ENCODE measurements at regions of chr5 and their contacts with region 1.

Region 1: GRCh38 chr5:143182901-143183820 is 220.3 kb downstream of the NR3C1 start:
- DNase-seq: peak; percentile 85
- H3K4me3 Mint-ChIP-seq: peak overlapping the region; percentile 73
- H3K27ac Mint-ChIP-seq: peak overlapping the region; percentile 97
- H3K4me1 Mint-ChIP-seq: peaks cover 59% of the 10 kb centered on the region
- H3K27me3 Mint-ChIP-seq: no peaks in the 10 kb centered on the region

Region 2: DNA sequence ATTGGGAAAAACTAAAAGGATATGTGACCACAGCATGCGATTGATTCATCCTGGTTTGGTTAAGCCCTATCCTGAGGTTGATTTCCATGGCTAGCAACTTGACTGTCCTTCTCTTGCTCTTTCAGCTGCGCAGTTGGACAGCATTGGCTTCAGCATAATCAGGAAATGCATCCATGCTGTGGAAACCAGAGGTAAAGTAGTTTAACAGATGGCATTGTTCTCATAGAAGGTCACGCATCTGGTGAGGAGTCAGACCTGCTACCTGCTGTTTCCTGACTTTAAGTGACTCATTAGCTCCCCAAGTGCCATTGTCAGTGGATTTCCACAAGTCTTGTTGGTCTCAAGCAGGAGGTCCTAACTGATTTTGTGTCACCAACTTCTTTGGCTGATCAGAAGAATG is 146.1 kb before region 1 on chr5:
- intact Hi-C with region 1: loop called (anchors 2 kb)
- DNase-seq: no peak
- H3K4me3 Mint-ChIP-seq: no peak overlapping the region
- H3K27ac Mint-ChIP-seq: peak overlapping the region; percentile 86
- H3K4me1 Mint-ChIP-seq: peaks cover 47% of the 10 kb centered on the region
- H3K27me3 Mint-ChIP-seq: no peaks in the 10 kb centered on the region

Region 3: GRCh38 chr5:143066556-143067281 is 116.4 kb before region 1 on chr5:
- intact Hi-C with region 1: loop called (anchors 1 kb)
- DNase-seq: no peak
- H3K4me3 Mint-ChIP-seq: peak overlapping the region; percentile 29
- H3K27ac Mint-ChIP-seq: peak overlapping the region; percentile 87
- H3K4me1 Mint-ChIP-seq: peaks cover 30% of the 10 kb centered on the region
- H3K27me3 Mint-ChIP-seq: no peaks in the 10 kb centered on the region

Region 4: GRCh38 chr5:143124593-143124992 is 58.6 kb before region 1 on chr5:
- intact Hi-C with region 1: loop called (anchors 5 kb)
- DNase-seq: no peak
- H3K4me3 Mint-ChIP-seq: no peak overlapping the region
- H3K27ac Mint-ChIP-seq: no peak overlapping the region
- H3K4me1 Mint-ChIP-seq: peaks cover 21% of the 10 kb centered on the region
- H3K27me3 Mint-ChIP-seq: no peaks in the 10 kb centered on the region

Region 5: GRCh38 chr5:143222287-143223231 is 39.4 kb after region 1 on chr5:
- intact Hi-C with region 1: loop called (anchors 1 kb)
- DNase-seq: peak; percentile 87
- H3K4me3 Mint-ChIP-seq: peak overlapping the region; percentile 71
- H3K27ac Mint-ChIP-seq: peak overlapping the region; percentile 95
- H3K4me1 Mint-ChIP-seq: peaks cover 56% of the 10 kb centered on the region
- H3K27me3 Mint-ChIP-seq: no peaks in the 10 kb centered on the region

Region 6: GRCh38 chr5:143350751-143351603 is 167.8 kb after region 1 on chr5:
- intact Hi-C with region 1: loop called (anchors 2 kb)
- DNase-seq: no peak
- H3K4me3 Mint-ChIP-seq: no peak overlapping the region
- H3K27ac Mint-ChIP-seq: no peak overlapping the region
- H3K4me1 Mint-ChIP-seq: peaks cover 42% of the 10 kb centered on the region
- H3K27me3 Mint-ChIP-seq: no peaks in the 10 kb centered on the region

Region 7: DNA sequence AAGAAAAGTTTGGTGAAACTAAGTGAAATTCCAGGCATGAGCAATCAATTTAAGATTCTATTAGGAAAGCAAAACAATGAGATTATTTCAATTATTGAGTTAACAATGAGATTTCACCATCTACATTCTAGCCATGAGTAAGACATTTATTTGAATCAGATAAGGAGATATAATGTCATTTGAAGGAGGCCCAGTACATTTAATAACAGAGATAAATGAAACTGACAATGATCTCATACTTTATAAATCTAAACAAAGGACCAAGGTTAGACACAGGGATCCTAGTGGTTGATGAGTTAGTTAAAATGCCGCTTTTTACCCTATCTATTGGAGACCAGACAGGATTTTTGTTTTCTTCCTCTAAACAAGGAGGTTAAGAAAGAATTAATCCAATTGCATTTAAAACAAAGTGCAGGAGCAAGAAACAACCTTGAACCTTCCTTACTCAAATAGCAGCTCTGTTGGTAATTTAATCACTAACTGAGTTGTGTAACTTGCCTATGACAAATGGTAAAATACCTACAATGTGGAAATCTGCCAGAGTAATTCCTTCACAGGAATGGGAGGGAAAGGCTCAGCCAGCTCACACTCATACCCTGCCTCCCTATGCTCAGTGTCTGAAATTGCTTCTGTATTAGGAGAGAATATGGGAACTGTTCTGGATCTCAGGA is 323.9 kb after region 1 on chr5:
- intact Hi-C with region 1: no loop called
- DNase-seq: no peak
- H3K4me3 Mint-ChIP-seq: no peak overlapping the region
- H3K27ac Mint-ChIP-seq: no peak overlapping the region
- H3K4me1 Mint-ChIP-seq: no peaks in the 10 kb centered on the region
- H3K27me3 Mint-ChIP-seq: no peaks in the 10 kb centered on the region

Region 8: GRCh38 chr5:144731786-144732185 is 1548.6 kb after region 1 on chr5:
- intact Hi-C with region 1: no loop called
- DNase-seq: no peak
- H3K4me3 Mint-ChIP-seq: no peak overlapping the region
- H3K27ac Mint-ChIP-seq: no peak overlapping the region
- H3K4me1 Mint-ChIP-seq: no peaks in the 10 kb centered on the region
- H3K27me3 Mint-ChIP-seq: no peaks in the 10 kb centered on the region

Measured in activated CD4-positive, alpha-beta T cell treated with anti-CD3 and anti-CD28 coated beads, Interleukin-2, amount 10 ng/mL, durations not matched to agents 24 days and 14 days (primary cell).